T-cell (primary cell): ENCODE measurements at regions of chr2 and their contacts with region 1.

Region 1: DNA sequence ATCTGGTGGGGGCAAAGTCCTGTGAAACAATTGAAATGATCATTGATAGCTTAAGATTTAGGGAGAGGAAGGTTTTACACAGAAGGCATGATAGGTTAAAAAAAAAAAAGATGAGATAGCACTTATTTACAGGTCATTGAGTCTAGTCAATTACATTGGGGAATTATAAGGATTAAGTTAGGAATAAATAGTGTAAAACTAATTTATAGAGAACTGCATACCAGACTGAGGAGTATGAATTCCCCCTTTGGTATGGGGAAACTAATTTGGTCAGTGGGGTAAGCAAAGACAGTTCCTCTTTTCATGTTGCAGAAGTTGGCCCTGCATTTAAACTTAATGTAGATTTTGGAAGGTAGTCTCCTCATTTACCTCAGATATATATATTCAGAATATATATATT is 10.8 kb downstream of the GLS start:
- DNase-seq: no peak
- ATAC-seq: no peak
- H3K4me3 ChIP-seq: no peak overlapping the region
- H3K4me3 Mint-ChIP-seq: no peak overlapping the region
- H3K27ac ChIP-seq: no peak overlapping the region
- H3K27ac Mint-ChIP-seq: peak overlapping the region; percentile 60 to 65
- H3K4me1 ChIP-seq: peaks cover 6 to 27% of the 10 kb centered on the region in 2 experiments
- H3K4me1 Mint-ChIP-seq: peaks cover 71 to 79% (median 74%) of the 10 kb centered on the region in 3 donors
- H3K27me3 ChIP-seq: no peaks in the 10 kb centered on the region
- H3K27me3 Mint-ChIP-seq: no peaks in the 10 kb centered on the region

Region 2: DNA sequence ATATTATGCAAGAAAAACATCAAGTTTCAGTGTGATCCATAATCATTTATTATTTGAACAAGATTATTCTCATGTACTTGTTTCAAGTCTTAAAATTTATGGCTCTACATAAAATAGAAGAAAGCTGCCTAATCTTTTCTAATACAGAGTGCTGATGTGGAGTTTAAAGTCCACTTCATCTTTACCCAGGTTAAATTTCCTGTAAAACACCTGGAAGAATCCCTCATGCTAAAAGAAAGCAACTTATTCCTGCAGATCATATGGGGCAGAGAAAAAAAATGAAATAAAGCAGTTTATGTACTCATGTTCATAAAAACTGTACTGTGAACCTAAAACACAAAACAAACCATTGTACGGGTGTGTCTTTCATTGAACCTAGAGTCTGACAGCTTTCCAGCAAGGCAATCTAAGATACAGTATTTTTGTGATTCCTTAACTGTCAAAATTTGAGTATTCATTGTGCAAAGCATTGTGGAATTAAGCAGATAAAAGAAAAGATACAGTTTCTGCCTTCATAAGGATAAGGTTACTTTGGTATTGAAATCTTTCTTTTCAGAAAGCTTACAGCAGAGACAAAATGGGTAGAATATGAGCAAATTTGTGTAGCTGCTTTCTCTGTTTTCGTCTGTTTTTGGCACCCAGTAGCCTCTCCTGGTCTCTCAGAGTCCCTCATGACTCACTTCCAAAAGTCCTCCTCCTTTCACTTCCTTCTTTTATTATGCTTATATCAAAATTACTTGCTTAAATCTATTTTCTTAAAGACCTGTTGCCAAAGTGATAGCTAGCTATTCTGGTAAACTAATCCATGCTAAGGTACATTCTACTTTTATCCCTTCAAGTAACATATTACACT is 37.6 kb before region 1 on chr2:
- CTCF ChIA-PET with region 1: interaction called, 6 to 12 read pairs
- POLR2A ChIA-PET with region 1: interaction called in 1 of 2 experiments, 3 read pairs
- DNase-seq: no peak
- ATAC-seq: no peak
- H3K4me3 ChIP-seq: no peak overlapping the region
- H3K4me3 Mint-ChIP-seq: no peak overlapping the region
- H3K27ac ChIP-seq: no peak overlapping the region
- H3K27ac Mint-ChIP-seq: no peak overlapping the region
- H3K4me1 ChIP-seq: no peaks in the 10 kb centered on the region
- H3K4me1 Mint-ChIP-seq: peaks cover 0 to 2% (median 2%) of the 10 kb centered on the region in 3 donors
- H3K27me3 ChIP-seq: no peaks in the 10 kb centered on the region
- H3K27me3 Mint-ChIP-seq: no peaks in the 10 kb centered on the region

Region 3: GRCh38 chr2:190904640-190905261 is 13.4 kb after region 1 on chr2:
- CTCF ChIA-PET with region 1: interaction called in 1 of 2 experiments, 4 read pairs
- POLR2A ChIA-PET with region 1: interaction called in 1 of 2 experiments, 11 read pairs
- DNase-seq: no peak
- ATAC-seq: no peak
- H3K4me3 ChIP-seq: no peak overlapping the region
- H3K4me3 Mint-ChIP-seq: no peak overlapping the region
- H3K27ac ChIP-seq: no peak overlapping the region
- H3K27ac Mint-ChIP-seq: no peak overlapping the region
- H3K4me1 ChIP-seq: no peaks in the 10 kb centered on the region
- H3K4me1 Mint-ChIP-seq: peaks cover 13 to 15% (median 13%) of the 10 kb centered on the region in 3 donors
- H3K27me3 ChIP-seq: no peaks in the 10 kb centered on the region
- H3K27me3 Mint-ChIP-seq: no peaks in the 10 kb centered on the region

Region 4: DNA sequence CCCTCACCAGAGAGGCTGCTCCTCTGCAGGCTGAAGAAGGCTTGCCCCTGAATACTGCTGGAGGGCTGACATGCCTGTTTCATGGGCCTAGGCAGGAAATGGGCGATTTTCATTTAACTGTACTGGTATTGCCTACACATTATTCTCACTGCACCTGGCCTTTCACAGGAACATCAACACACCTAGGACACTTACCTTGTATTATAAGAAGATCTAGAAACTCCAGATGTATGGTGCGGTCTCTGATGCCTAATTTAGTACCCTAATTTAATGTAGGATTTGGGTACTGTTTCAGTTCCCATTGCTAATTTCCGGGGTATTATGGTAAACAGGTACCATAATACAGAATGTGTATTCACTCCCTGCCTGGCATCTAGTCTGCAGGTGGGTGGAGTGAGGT is 499.8 kb after region 1 on chr2:
- CTCF ChIA-PET with region 1: no interaction called
- POLR2A ChIA-PET with region 1: no interaction called
- DNase-seq: no peak
- ATAC-seq: no peak
- H3K4me3 ChIP-seq: no peak overlapping the region
- H3K4me3 Mint-ChIP-seq: no peak overlapping the region
- H3K27ac ChIP-seq: no peak overlapping the region
- H3K27ac Mint-ChIP-seq: no peak overlapping the region
- H3K4me1 ChIP-seq: no peaks in the 10 kb centered on the region
- H3K4me1 Mint-ChIP-seq: no peaks in the 10 kb centered on the region
- H3K27me3 ChIP-seq: no peaks in the 10 kb centered on the region
- H3K27me3 Mint-ChIP-seq: peaks cover 0 to 1% of the 10 kb centered on the region in 2 donors